ENCODE measurements at regions of chr18 and their contacts with region 1.

Region 1: GRCh38 chr18:31354990-31355389 is 21.6 kb upstream of the DSG4 start:
- DNase-seq: no peak
- H3K4me3 ChIP-seq: no peak overlapping the region
- H3K27ac ChIP-seq: no peak overlapping the region
- H3K4me1 ChIP-seq: no peaks in the 10 kb centered on the region
- H3K27me3 ChIP-seq: no peaks in the 10 kb centered on the region
- CTCF ChIP-seq: no peak
- EP300 ChIP-seq: no peak
- POLR2A ChIP-seq: no peak

Region 2: DNA sequence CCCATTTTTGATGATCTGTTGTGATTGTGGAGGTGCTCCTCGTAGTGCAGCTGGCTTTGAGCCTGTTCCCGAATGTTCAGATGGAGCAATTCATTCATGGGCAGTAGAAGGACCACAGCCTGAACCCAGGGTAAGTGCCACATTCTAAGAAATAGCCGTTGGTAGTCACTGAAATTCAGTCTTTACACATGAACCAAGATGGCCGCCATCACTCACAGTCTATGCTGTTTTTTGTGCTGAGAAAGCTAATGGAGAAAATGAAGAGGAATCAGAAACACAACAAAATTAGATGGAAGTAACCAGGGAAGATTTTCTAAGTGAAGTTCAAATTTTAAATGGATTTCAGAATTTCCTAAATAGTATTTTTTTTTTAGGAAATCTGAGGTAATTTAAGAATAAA is 11.5 kb before region 1 on chr18:
- in situ Hi-C with region 1: no loop called
- intact Hi-C with region 1: loop called (anchors 2 kb)
- DNase-seq: no peak
- H3K4me3 ChIP-seq: no peak overlapping the region
- H3K27ac ChIP-seq: no peak overlapping the region
- H3K4me1 ChIP-seq: no peaks in the 10 kb centered on the region
- H3K27me3 ChIP-seq: no peaks in the 10 kb centered on the region
- CTCF ChIP-seq: no peak
- EP300 ChIP-seq: no peak
- POLR2A ChIP-seq: no peak